ENCODE measurements at regions of chr11 and their contacts with region 1.

Region 1: DNA sequence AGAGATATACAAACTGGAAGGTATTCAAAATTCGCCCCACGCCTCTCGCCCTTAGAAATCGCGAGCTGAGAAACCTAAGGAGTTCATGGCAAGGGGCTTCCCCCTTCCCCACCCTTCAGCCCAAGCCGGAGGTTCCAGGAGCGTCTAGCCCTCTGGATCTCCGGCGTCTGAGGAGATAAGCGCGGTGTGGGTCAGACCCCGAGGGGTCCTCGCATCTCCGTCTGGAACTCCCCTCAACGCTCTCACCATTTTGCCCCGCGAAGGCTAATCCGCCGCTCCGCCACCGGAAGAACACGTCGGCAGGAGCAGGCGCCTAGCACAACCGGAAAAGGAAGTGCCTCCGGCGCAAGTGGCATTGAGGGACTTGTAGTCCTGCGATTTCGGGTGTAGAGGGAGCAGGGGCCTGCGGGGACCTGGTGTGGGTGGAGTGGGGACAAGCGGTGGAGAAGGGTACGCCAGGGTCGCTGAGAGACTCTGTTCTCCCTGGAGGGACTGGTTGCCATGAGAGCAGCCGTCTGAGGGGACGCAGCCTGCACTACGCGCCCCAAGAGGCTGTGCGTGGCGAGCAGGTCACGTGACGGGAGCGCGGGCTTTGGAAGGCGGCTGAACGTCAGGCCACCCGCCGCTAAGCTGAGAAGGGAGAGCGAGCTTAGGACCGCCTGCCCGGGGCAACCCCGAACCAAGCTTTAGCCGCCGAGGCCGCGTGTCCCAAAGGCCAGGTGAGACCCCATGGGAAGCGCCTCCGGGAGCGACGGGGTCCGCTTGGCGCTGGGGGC is at the starts of genes FEN1 and TMEM258:
- DNase-seq: peak; percentile 93
- H3K4me3 Mint-ChIP-seq: peak within 1 kb of the TSS; percentile 77
- H3K27ac Mint-ChIP-seq: peak within 1 kb of the TSS; percentile 97
- H3K4me1 Mint-ChIP-seq: peaks cover 65% of the 10 kb centered on the region
- H3K27me3 Mint-ChIP-seq: no peaks in the 10 kb centered on the region

Region 2: GRCh38 chr11:61718621-61719302 is 73.7 kb before region 1 on chr11:
- CTCF ChIA-PET with region 1: no interaction called
- DNase-seq: no peak
- H3K4me3 Mint-ChIP-seq: no peak overlapping the region
- H3K27ac Mint-ChIP-seq: no peak overlapping the region
- H3K4me1 Mint-ChIP-seq: no peaks in the 10 kb centered on the region
- H3K27me3 Mint-ChIP-seq: peaks cover 24% of the 10 kb centered on the region

Region 3: GRCh38 chr11:61806785-61807184 is 14.3 kb after region 1 on chr11:
- CTCF ChIA-PET with region 1: interaction called, 72 read pairs
- DNase-seq: no peak
- H3K4me3 Mint-ChIP-seq: no peak overlapping the region
- H3K27ac Mint-ChIP-seq: no peak overlapping the region
- H3K4me1 Mint-ChIP-seq: no peaks in the 10 kb centered on the region
- H3K27me3 Mint-ChIP-seq: no peaks in the 10 kb centered on the region

Region 4: DNA sequence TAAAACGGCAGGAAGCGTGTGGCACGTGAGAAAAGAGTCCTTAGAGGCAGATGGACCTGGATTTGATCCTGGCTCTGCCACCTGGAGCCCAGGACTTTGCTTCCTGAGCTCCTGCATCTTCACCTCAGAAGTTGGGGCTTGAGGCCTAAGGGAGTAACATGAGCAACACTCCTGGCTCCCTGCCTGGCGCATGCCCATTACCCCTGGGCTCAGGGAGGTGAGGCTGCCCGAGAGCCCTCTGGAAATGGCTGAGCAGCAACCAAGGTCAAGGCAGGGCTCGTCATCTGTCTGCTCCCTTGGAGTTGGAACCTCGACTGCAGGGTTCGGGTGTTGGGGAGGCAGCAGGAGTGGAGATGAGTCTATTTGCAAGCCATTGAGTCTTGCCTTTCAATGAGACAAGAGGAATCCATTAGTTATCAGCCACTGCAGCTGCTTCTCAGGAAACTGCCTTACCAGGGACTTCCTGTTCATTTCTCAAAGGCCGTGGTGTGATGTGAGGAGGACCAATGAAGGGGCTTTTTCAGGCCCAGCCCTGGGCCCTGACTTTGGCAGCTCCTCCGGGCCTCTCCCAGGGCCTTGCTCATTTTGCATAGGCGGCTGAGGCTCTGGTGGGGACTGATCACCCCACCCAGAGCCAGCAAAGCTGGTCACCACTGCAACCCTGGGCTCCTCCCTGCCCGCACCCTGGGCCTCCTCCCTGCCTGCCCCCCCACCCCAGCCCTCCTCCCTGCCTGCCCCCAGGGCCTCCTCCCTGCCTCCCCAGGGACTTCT is 42.0 kb after region 1 on chr11:
- CTCF ChIA-PET with region 1: interaction called, 19 read pairs
- DNase-seq: peak; percentile 86
- H3K4me3 Mint-ChIP-seq: peak overlapping the region; percentile 73
- H3K27ac Mint-ChIP-seq: peak overlapping the region; percentile 99
- H3K4me1 Mint-ChIP-seq: peaks cover 67% of the 10 kb centered on the region
- H3K27me3 Mint-ChIP-seq: peaks cover 2% of the 10 kb centered on the region

Region 5: GRCh38 chr11:61899146-61899841 is 106.8 kb after region 1 on chr11:
- CTCF ChIA-PET with region 1: interaction called, 28 read pairs
- DNase-seq: peak; percentile 94
- H3K4me3 Mint-ChIP-seq: no peak overlapping the region
- H3K27ac Mint-ChIP-seq: peak overlapping the region; percentile 19
- H3K4me1 Mint-ChIP-seq: peaks cover 6% of the 10 kb centered on the region
- H3K27me3 Mint-ChIP-seq: peaks cover 16% of the 10 kb centered on the region

Region 6: DNA sequence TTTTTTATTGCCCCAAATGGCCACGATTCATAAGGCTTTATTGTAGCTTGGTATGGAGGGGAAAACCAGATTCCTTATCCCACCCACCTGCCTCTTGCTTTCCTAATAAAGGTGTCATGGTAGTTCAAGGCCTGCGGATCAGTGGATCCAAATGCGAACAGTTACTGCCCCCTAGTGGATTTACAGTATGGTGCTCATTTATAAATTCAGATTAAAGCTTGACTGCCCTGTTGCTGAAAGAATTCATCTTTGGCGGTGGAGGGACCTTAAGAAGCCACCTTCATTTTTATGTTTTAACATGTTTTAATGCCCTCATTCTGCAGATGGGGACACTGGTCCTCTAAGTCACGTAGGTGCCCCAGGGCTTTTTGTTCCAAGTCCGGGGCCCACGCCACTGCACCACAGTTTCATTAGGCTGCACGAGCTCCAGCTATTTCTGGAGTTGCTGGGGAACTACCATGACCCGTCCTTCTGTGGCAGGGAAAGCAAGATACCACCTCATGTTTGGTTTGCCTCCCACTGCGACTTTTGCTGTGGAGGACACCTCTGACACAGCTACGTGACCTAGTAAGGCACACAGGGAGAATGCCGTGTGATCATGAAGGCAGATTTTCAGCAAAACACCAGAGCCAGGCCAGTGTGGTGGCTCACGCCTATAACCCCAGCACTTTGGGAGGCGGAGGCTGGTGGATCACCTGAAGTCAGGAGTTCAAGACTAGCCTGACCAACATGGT is 315.7 kb after region 1 on chr11:
- CTCF ChIA-PET with region 1: interaction called, 29 read pairs
- DNase-seq: peak; percentile 56
- H3K4me3 Mint-ChIP-seq: no peak overlapping the region
- H3K27ac Mint-ChIP-seq: no peak overlapping the region
- H3K4me1 Mint-ChIP-seq: peaks cover 24% of the 10 kb centered on the region
- H3K27me3 Mint-ChIP-seq: peaks cover 19% of the 10 kb centered on the region